HEK293 (cell line): ENCODE measurements at regions of chr6 and their contacts with region 1.

Region 1: GRCh38 chr6:138588805-138589434 is 89.6 kb upstream of the NHSL1 start:
- H3K4me3 ChIP-seq: no peak overlapping the region
- H3K27ac ChIP-seq: no peak overlapping the region
- H3K4me1 ChIP-seq: peaks cover 19% of the 10 kb centered on the region
- CTCF ChIP-seq: peak; percentile 83

Region 2: GRCh38 chr6:138428944-138429598 is 159.8 kb before region 1 on chr6:
- CTCF ChIA-PET with region 1: interaction called, 34 read pairs
- POLR2A ChIA-PET with region 1: no interaction called
- H3K4me3 ChIP-seq: no peak overlapping the region
- H3K27ac ChIP-seq: no peak overlapping the region
- H3K4me1 ChIP-seq: no peaks in the 10 kb centered on the region
- CTCF ChIP-seq: peak; percentile 39

Region 3: DNA sequence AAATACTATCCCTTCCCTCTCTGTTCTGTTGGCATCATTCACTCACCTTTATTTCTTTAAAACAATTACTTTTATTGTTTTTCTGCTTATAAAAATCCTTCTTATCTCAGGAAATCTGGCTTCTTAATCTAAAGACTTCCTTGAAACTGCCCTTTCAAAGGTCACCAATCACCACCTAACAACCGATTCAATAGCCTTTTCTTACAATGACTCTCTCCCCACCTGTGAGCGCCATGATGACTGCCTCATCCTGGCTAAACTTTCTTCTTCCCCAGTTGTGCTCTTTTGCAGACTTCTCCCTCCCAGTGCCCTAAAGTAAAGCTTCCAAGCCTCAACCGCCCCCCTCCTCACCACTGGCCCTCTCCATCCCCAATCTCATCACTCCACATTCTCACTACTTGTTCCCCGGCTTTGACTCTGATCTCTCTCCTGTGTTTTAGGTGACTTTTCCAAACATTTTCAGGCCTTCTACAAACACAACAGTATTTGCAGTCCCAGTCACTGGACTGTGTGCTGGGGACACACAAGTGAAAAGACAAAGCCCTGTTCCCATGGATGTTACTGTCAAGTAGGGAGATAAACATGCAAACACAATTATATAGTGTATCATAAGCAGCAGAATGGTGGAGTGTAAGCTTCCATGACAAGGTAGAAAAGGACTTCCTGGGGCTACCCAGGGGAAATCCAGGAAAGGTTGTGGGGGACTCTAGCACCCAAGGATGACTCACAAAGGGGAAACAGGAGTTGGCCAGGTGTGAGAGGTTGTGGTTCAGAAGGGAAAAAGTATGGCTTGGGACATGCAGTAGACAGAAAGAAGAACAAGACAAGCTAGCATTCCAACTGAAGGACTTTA is 102.4 kb before region 1 on chr6:
- CTCF ChIA-PET with region 1: no interaction called
- POLR2A ChIA-PET with region 1: no interaction called
- H3K4me3 ChIP-seq: no peak overlapping the region
- H3K27ac ChIP-seq: no peak overlapping the region
- H3K4me1 ChIP-seq: peaks cover 15% of the 10 kb centered on the region
- CTCF ChIP-seq: no peak

Region 4: DNA sequence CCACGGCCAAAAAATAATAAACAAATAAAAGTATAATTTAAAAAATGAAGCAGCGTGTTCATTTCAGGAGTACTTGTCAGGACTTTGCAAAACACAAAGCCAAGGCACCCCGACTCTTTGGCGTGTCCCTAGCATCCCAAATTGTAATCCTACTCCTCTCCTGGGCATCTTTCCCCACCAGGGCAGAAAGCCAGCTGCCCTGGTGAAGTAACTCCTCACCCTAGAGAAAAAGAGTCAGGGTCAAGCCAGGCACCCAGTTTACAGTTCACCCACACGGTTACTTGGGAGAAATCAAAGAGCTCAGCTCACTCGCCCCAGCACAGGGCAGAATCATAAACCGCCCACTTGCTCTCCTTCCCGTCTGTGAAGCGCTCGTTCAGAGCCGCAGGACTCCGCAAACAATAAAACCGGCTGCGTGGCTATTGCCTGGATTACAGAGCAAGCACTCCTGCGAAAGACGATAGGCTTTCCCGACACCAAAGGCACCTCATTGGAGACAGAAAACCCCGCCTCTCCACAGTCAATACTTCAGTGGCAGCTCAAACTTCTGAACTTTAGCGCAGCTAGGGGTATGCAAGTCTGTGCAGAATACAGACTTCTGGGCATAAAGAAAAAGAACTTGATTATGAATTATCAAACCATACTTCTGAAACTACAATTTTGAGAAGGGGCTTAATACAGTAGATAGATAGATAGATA is 16.6 kb before region 1 on chr6:
- CTCF ChIA-PET with region 1: interaction called, 40 read pairs
- POLR2A ChIA-PET with region 1: interaction called, 3 read pairs
- H3K4me3 ChIP-seq: peak overlapping the region; percentile 47
- H3K27ac ChIP-seq: peak overlapping the region; percentile 28; the same call in 1 of the 2 replicates
- H3K4me1 ChIP-seq: peaks cover 27% of the 10 kb centered on the region
- CTCF ChIP-seq: no peak

Region 5: GRCh38 chr6:138605958-138606357 is 17.0 kb after region 1 on chr6:
- CTCF ChIA-PET with region 1: interaction called, 37 read pairs
- POLR2A ChIA-PET with region 1: no interaction called
- H3K4me3 ChIP-seq: no peak overlapping the region
- H3K27ac ChIP-seq: no peak overlapping the region
- H3K4me1 ChIP-seq: peaks cover 9% of the 10 kb centered on the region
- CTCF ChIP-seq: no peak

Region 6: GRCh38 chr6:138765896-138766655 is 177.2 kb after region 1 on chr6:
- CTCF ChIA-PET with region 1: interaction called, 157 read pairs
- POLR2A ChIA-PET with region 1: no interaction called
- H3K4me3 ChIP-seq: no peak overlapping the region
- H3K27ac ChIP-seq: no peak overlapping the region
- H3K4me1 ChIP-seq: no peaks in the 10 kb centered on the region
- CTCF ChIP-seq: no peak